ENCODE measurements at regions of chr19 and their contacts with region 1.

Region 1: DNA sequence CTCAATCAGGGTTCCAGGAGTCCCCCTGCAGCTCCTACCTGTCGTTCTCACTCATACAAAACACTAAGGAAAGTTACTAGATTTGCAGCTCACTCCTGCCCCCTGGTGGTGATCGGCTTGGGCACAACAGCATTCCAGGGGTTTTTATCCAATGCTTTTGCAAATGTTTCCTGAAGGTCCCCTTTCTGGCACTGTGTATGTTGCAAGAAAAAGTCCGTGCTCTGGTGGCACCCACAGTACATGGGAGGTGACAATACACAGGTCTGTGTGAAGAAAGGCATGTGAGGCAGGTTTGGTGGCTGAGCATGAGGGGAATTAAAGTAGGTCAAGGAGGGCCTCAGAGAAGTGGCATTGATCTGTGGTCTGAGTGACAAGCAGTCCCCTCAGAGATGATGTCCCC is 8.6 kb upstream of the TYK2 start:
- DNase-seq: peak; percentile 67 to 86 (median 79)
- H3K4me3 ChIP-seq: no peak overlapping the region
- H3K4me3 Mint-ChIP-seq: peak overlapping the region in 1 of 7 donors; percentile 73
- H3K27ac ChIP-seq: no peak overlapping the region
- H3K27ac Mint-ChIP-seq: peak overlapping the region; percentile 25 to 77 (median 57)
- H3K4me1 ChIP-seq: no peaks in the 10 kb centered on the region
- H3K4me1 Mint-ChIP-seq: peaks cover 0 to 6% (median 6%) of the 10 kb centered on the region in 3 donors
- H3K27me3 ChIP-seq: no peaks in the 10 kb centered on the region
- H3K27me3 Mint-ChIP-seq: no peaks in the 10 kb centered on the region

Region 2: GRCh38 chr19:9934132-9934950 is 454.6 kb before region 1 on chr19:
- CTCF ChIA-PET with region 1: interaction called, 11 read pairs
- POLR2A ChIA-PET with region 1: no interaction called
- DNase-seq: peak; percentile 72 to 84 (median 78)
- H3K4me3 ChIP-seq: no peak overlapping the region
- H3K4me3 Mint-ChIP-seq: peak overlapping the region in 3 of 7 donors; percentile 25 to 32 (median 26)
- H3K27ac ChIP-seq: no peak overlapping the region
- H3K27ac Mint-ChIP-seq: peak overlapping the region in 2 of 8 donors; percentile 40 to 46
- H3K4me1 ChIP-seq: peaks cover 23% of the 10 kb centered on the region
- H3K4me1 Mint-ChIP-seq: peaks cover 24 to 34% (median 32%) of the 10 kb centered on the region in 3 donors
- H3K27me3 ChIP-seq: peaks cover 33% of the 10 kb centered on the region
- H3K27me3 Mint-ChIP-seq: peaks cover 37 to 58% of the 10 kb centered on the region in 2 donors

Region 3: GRCh38 chr19:10246511-10246910 is 142.4 kb before region 1 on chr19:
- CTCF ChIA-PET with region 1: no interaction called
- POLR2A ChIA-PET with region 1: no interaction called
- DNase-seq: no peak
- H3K4me3 ChIP-seq: no peak overlapping the region
- H3K4me3 Mint-ChIP-seq: no peak overlapping the region
- H3K27ac ChIP-seq: no peak overlapping the region
- H3K27ac Mint-ChIP-seq: no peak overlapping the region
- H3K4me1 ChIP-seq: peaks cover 4% of the 10 kb centered on the region
- H3K4me1 Mint-ChIP-seq: peaks cover 3 to 10% (median 6%) of the 10 kb centered on the region in 3 donors
- H3K27me3 ChIP-seq: no peaks in the 10 kb centered on the region
- H3K27me3 Mint-ChIP-seq: no peaks in the 10 kb centered on the region

Region 4: DNA sequence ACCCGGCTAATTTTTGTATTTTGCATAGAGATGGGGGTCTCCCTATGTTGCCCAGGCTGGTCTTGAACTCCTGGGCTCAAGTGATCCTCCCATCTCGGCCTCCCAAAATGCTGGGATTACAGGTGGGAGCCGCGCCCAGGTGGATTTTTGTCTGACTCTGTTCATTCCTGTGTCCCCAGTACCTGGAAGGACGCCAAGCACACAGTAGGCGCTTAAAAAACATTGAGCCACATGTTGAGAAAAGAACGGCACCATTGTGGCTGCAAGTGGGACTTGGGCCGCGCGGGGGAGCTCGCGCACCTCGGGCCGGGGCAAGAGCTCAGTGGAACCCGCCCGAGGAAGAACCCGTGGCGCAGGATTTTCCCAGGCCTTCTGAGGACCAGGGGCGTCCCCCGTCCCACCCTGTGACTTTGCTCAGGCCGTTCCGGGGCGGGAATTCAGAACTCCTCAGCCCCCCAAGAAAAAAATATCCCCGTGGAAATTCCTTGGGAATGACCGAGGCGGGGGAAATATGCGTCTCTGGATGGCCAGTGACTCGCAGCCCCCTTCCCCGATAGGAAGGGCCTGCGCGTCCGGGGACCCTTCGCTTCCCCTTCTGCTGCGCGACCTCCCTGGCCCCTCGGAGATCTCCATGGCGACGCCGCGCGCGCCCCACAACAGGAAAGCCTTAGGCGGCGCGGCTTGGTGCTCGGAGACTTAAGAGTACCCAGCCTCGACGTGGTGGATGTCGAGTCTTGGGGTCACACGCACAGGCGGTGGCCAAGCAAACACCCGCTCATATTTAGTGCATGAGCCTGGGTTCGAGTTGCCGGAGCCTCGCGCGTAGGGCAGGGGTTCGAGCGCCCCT is 119.4 kb before region 1 on chr19:
- CTCF ChIA-PET with region 1: interaction called, 355 read pairs
- POLR2A ChIA-PET with region 1: interaction called, 35 read pairs
- DNase-seq: peak; percentile 81 to 90 (median 83)
- H3K4me3 ChIP-seq: peak overlapping the region; percentile 76
- H3K4me3 Mint-ChIP-seq: peak overlapping the region; percentile 83 to 94 (median 87)
- H3K27ac ChIP-seq: peak overlapping the region; percentile 87
- H3K27ac Mint-ChIP-seq: peak overlapping the region; percentile 90 to 99 (median 95)
- H3K4me1 ChIP-seq: peaks cover 21% of the 10 kb centered on the region
- H3K4me1 Mint-ChIP-seq: peaks cover 26 to 43% (median 28%) of the 10 kb centered on the region in 3 donors
- H3K27me3 ChIP-seq: no peaks in the 10 kb centered on the region
- H3K27me3 Mint-ChIP-seq: peaks cover 0 to 1% of the 10 kb centered on the region in 2 donors

Region 5: GRCh38 chr19:10292206-10292788 is 96.7 kb before region 1 on chr19:
- CTCF ChIA-PET with region 1: interaction called, 12 read pairs
- POLR2A ChIA-PET with region 1: no interaction called
- DNase-seq: peak; percentile 52 to 78 (median 61)
- H3K4me3 ChIP-seq: peak overlapping the region; percentile 62
- H3K4me3 Mint-ChIP-seq: peak overlapping the region; percentile 76 to 93 (median 83)
- H3K27ac ChIP-seq: peak overlapping the region; percentile 69
- H3K27ac Mint-ChIP-seq: peak overlapping the region in 6 of 8 donors; percentile 11 to 88 (median 52)
- H3K4me1 ChIP-seq: peaks cover 76% of the 10 kb centered on the region
- H3K4me1 Mint-ChIP-seq: peaks cover 56 to 73% (median 59%) of the 10 kb centered on the region in 3 donors
- H3K27me3 ChIP-seq: peaks cover 61% of the 10 kb centered on the region
- H3K27me3 Mint-ChIP-seq: peaks cover 60 to 61% of the 10 kb centered on the region in 2 donors

Region 6: DNA sequence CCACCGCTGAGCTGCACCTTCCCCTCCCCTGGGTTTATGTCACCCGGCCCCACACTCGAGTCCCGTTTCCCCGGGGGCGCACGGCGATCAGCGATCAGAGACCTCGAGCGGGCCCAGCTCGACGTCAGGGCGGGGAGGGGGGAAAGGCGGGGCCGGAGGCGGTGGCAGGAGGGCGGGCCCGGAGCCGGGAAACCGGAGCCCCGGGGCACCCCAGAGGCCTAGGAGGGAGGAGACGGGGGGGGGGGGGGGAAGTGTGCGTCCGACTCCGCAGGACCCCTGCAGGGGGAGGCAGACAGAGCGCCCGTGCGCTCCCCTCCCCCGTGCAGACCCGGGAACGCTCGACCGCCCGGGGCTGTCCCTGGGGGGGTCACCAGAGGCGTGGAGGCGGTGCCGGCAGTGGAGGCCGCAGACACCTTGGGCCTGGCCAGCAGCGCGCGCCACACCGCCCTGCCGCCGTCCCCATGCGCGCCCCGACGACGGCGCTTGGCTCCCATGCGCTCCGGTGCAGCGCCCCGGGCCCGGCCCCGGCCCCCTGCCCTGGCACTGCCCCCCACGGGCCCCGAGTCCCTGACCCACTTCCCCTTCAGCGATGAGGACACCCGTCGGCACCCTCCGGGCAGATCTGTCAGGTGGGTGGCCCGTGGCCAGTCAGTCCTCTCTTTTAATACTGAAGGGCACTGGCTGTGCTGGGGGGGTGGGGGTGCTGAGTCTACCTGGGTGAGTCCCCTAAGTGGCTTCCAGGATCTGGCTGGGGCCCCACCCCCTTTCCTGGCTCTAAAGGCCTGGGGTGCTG is 43.2 kb after region 1 on chr19:
- CTCF ChIA-PET with region 1: interaction called, 15 read pairs
- POLR2A ChIA-PET with region 1: no interaction called
- DNase-seq: peak; percentile 61 to 86 (median 74)
- H3K4me3 ChIP-seq: peak overlapping the region; percentile 45
- H3K4me3 Mint-ChIP-seq: peak overlapping the region; percentile 71 to 95 (median 89)
- H3K27ac ChIP-seq: peak overlapping the region; percentile 85
- H3K27ac Mint-ChIP-seq: peak overlapping the region; percentile 90 to 100 (median 99)
- H3K4me1 ChIP-seq: peaks cover 45% of the 10 kb centered on the region
- H3K4me1 Mint-ChIP-seq: peaks cover 52 to 71% (median 53%) of the 10 kb centered on the region in 3 donors
- H3K27me3 ChIP-seq: peaks cover 4% of the 10 kb centered on the region
- H3K27me3 Mint-ChIP-seq: peaks cover 5 to 8% of the 10 kb centered on the region in 2 donors